Common myeloid progenitor, CD34-positive (primary cell): ENCODE measurements at regions of chr5 and their contacts with region 1.

Region 1: DNA sequence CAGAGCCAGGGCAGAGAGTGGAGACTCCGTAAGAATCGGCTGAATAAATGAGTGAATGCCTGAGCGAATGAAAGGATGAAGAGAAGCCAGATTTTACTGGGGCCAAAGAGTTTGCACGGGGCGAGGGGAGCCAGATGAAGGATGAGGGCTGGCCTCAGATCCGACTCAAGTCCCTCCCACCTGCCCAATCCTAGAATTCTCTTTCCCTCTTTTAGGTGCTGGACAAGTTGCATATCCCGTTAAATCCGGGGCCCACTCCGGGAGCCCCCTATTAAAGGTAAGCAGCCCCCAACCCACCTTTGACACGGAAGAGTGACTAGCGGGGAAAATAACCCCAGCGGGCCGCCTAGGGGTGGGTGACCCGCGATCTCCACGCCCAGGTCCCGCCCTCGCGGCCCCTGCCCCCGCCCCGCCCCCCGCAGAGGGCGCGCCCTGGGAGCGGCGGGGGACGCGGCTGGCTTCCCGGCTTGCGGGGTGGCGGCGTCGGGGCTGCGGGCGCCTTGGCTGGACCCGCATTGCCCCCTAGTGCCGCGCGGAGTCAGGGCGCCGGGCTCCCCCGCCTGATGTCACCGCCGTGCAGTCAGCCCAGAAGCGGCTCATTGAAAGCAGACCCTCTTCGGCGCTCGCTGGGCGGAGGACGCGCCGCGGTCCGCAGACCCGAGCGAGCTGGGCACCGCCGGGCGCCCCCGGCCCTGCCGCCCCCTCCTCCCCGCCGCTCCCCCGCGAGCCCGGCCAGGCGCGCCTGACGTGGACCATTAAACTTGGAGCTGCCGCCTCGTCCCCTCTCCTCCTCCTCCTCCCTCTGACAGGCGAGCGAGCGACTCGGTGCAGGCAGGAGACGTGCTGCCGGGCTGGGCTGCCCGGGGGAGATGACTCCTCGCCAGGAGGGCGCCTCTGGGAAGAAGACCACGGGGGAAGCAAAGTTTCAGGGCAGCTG is at the start of gene ADRA1B:
- DNase-seq: peak; percentile 67 to 81 (median 79)
- H3K4me3 ChIP-seq: peak within 1 kb of the TSS in 5 of 7 experiments; percentile 16 to 62 (median 32)
- H3K27ac ChIP-seq: no peak within 1 kb of the TSS
- H3K4me1 ChIP-seq: peaks cover 0 to 10% (median 9%) of the 10 kb centered on the region in 4 experiments
- H3K27me3 ChIP-seq: peaks cover 2 to 59% (median 26%) of the 10 kb centered on the region in 5 experiments

Region 2: DNA sequence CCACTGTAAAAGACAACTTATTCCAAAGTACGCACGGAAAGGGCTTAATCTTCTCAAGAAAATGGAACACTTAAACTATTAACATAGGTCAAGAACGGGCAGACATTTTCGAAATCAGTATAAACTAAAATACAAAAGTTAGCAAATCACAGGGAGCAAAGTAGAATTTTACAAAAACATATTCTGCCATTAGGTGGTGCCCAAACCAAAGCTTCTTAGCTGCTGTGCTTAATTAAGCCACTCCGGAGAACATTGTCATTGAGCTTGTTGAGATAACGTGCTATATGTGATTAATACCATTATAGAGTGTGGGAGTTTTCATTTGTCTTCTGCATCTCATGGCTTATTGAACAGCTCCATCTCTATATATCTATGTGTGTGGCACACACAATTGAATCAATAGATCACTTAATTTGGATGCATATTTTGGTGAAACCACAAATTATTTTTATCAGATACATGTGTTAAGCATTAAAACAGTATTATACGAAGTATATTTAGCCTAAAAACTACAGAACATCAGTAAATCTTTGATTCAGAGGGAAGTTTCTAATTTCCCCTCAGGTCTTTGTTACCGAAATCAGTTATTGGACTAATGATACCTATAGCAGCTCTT is 629.6 kb before region 1 on chr5:
- CTCF ChIA-PET with region 1: interaction called, 13 read pairs
- POLR2A ChIA-PET with region 1: no interaction called
- DNase-seq: peak; percentile 60 to 81 (median 79)
- H3K4me3 ChIP-seq: no peak overlapping the region
- H3K27ac ChIP-seq: no peak overlapping the region
- H3K4me1 ChIP-seq: peaks cover 0 to 4% (median 2%) of the 10 kb centered on the region in 4 experiments
- H3K27me3 ChIP-seq: no peaks in the 10 kb centered on the region

Region 3: DNA sequence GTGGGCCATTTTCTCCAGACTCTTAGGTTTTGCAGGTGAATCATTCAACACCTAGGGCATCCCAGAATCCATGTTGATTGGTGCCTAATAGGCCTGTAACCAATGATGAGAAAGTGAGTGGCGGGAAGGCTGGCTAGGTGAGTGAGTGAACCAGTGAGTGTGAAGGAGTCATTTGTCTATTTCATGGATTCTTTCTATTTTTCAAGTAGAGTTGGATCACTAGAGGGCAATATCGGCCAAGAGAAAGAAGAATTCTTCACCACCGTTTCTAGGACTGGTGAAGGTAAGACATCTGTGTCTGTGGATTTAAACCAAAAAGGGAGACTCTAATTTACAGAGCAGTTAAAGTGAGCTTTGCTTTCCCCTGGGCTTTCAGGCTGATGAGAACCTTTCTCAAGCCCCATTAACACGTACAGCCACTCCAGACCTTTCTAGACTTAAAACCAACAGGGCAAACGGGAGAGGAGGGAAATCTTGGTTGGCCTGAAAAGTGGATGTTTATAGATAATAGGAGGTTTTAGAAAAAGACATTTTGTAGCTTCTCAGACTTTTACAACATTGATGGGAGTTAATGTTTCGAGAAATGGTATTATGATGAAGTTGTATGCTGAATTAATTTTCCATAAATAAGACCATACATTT is 471.6 kb before region 1 on chr5:
- CTCF ChIA-PET with region 1: interaction called, 28 read pairs
- POLR2A ChIA-PET with region 1: no interaction called
- DNase-seq: peak; percentile 53 to 72 (median 68)
- H3K4me3 ChIP-seq: no peak overlapping the region
- H3K27ac ChIP-seq: no peak overlapping the region
- H3K4me1 ChIP-seq: no peaks in the 10 kb centered on the region
- H3K27me3 ChIP-seq: peaks cover 0 to 9% (median 0%) of the 10 kb centered on the region in 5 experiments

Region 4: GRCh38 chr5:159642379-159642778 is 273.8 kb before region 1 on chr5:
- CTCF ChIA-PET with region 1: interaction called, 11 read pairs
- POLR2A ChIA-PET with region 1: no interaction called
- DNase-seq: peak; percentile 17 to 47 (median 45)
- H3K4me3 ChIP-seq: no peak overlapping the region
- H3K27ac ChIP-seq: no peak overlapping the region
- H3K4me1 ChIP-seq: no peaks in the 10 kb centered on the region
- H3K27me3 ChIP-seq: no peaks in the 10 kb centered on the region

Region 5: DNA sequence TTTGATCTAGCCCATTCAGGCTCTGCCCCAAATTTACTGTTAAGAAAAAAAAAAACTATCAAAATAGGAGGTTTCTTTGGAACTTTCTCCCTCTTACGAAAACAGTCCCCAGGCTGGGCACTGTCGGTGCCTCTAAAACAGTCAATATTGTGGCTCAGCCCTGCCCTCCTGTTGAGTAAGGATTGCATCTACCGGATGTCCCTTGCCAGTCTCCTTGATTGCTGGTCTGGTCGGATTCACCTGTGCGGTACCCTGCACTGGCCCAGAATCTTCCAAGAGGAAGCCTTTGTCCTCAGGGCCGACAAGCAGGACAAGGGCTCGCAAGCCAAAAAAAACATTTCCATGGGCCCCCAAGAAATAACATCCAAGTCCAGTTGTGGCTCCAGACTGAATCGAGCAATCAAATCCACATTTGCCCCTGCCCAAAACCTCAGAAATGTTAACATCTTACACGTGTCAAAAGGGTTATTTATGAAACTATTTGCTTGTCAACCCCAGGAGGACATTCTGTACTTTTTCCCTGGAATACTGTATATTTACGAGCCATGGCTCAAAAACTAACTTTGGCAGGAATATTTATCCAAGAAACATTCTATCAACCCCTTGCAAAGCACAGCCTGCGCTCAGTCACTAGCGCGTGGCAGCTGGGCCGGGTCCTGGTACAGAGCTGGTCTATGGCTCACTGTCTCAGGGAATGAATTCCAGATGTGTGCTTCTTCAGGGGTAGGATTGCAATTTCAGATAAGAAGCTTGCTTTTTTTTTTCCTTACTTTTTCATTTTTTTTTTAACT is 129.1 kb before region 1 on chr5:
- CTCF ChIA-PET with region 1: no interaction called
- POLR2A ChIA-PET with region 1: no interaction called
- DNase-seq: no peak
- H3K4me3 ChIP-seq: no peak overlapping the region
- H3K27ac ChIP-seq: no peak overlapping the region
- H3K4me1 ChIP-seq: no peaks in the 10 kb centered on the region
- H3K27me3 ChIP-seq: no peaks in the 10 kb centered on the region

Region 6: GRCh38 chr5:160312134-160312959 is 396.2 kb after region 1 on chr5 and contains the start of gene CCNJL:
- CTCF ChIA-PET with region 1: no interaction called
- POLR2A ChIA-PET with region 1: no interaction called
- DNase-seq: peak; percentile 19 to 57 (median 49)
- H3K4me3 ChIP-seq: peak within 1 kb of the TSS; percentile 49 to 78 (median 67)
- H3K27ac ChIP-seq: no peak within 1 kb of the TSS
- H3K4me1 ChIP-seq: peaks cover 7 to 38% (median 19%) of the 10 kb centered on the region in 4 experiments
- H3K27me3 ChIP-seq: peaks cover 0 to 55% (median 21%) of the 10 kb centered on the region in 5 experiments

Region 7: GRCh38 chr5:160978944-160979343 is 1062.8 kb after region 1 on chr5:
- CTCF ChIA-PET with region 1: no interaction called
- POLR2A ChIA-PET with region 1: no interaction called
- DNase-seq: no peak
- H3K4me3 ChIP-seq: no peak overlapping the region
- H3K27ac ChIP-seq: no peak overlapping the region
- H3K4me1 ChIP-seq: no peaks in the 10 kb centered on the region
- H3K27me3 ChIP-seq: peaks cover 0 to 2% (median 0%) of the 10 kb centered on the region in 5 experiments